Lower lobe of right lung (tissue), 2 donors: ENCODE measurements at regions of chr14 and their contacts with region 1.

Region 1: DNA sequence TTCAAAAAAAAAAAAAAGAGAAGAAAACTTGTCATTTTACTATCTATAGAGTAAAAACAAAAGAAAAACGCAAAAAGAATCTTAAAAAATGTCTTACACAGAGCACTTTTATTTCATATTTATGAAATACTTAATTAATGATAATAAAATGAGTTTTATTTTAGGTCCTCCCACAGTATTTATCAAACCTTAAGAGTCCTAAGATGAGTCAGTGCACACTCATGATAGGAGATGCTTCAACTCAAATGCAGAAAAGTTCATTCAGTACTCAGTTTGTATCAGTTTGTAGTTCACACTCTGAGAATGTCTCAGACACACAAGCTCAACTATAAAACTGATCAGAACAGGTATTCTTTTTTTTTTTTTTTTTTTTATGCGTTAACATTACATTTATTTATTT is 41.7 kb downstream of the TRIM9 start:
- DNase-seq: no peak
- ATAC-seq: no peak
- H3K4me3 ChIP-seq: no peak overlapping the region
- H3K27ac ChIP-seq: no peak overlapping the region
- H3K4me1 ChIP-seq: no peaks in the 10 kb centered on the region
- H3K27me3 ChIP-seq: no peaks in the 10 kb centered on the region
- CTCF ChIP-seq: no peak

Region 2: DNA sequence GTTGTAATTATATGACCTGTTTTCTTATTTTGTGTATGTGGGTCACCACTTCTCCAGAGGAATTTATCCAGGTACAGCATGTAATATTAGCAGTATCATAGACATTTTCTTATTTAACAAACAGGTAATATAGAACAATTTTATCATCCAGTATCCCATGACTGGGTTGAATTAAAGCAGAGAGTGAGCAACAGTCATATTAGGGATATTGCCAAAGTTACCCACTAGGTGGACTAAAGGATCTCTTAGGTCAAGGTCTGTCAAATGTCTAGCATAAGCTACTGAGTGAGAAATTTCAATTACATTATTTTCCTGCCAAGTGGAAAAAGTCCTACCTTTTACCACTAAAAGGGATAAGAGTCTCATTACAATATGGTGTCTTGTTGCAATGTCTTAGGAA is 103.9 kb after region 1 on chr14:
- intact Hi-C with region 1: no loop called
- DNase-seq: no peak
- ATAC-seq: no peak
- H3K4me3 ChIP-seq: no peak overlapping the region
- H3K27ac ChIP-seq: no peak overlapping the region
- H3K4me1 ChIP-seq: no peaks in the 10 kb centered on the region
- H3K27me3 ChIP-seq: no peaks in the 10 kb centered on the region
- CTCF ChIP-seq: peak; percentile 16

Region 3: DNA sequence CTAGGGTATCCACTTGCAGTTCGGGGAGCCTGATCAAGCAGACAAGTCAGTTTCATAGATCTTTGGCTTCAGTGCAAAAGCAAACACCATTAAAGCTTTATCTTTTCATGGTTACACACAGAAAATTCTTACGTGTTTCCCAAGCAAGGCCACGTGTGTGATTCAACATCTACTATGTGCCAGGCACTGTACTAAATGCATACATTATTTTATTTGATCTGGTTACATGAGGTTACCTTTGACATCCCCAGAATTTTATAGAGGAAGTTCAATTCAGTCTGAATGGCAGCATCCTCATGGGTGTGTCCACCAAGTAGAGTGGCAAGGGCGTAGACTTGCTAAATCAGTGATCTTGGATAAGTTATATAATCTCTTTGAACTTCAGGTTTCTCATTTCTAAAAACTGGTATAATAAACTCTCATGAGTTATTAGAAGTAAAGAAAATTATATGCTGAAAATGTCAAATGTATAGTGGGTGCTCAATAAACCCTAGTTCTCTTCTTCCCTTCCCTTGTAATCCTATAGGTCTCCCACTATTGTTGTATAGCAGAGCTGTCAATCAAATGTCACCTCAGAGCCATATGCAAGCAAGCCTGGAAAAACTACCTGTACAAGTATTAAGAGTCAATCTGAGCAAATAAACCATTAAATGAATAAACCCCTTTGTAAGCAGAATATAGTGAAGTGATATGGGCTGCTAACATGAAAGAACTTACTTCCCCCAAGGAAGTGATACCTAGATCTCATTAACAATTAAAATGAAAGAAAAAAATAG is 136.6 kb after region 1 on chr14:
- intact Hi-C with region 1: loop called (anchors 5 kb)
- DNase-seq: no peak
- ATAC-seq: no peak
- H3K4me3 ChIP-seq: no peak overlapping the region
- H3K27ac ChIP-seq: no peak overlapping the region
- H3K4me1 ChIP-seq: no peaks in the 10 kb centered on the region
- H3K27me3 ChIP-seq: no peaks in the 10 kb centered on the region
- CTCF ChIP-seq: no peak

Region 4: DNA sequence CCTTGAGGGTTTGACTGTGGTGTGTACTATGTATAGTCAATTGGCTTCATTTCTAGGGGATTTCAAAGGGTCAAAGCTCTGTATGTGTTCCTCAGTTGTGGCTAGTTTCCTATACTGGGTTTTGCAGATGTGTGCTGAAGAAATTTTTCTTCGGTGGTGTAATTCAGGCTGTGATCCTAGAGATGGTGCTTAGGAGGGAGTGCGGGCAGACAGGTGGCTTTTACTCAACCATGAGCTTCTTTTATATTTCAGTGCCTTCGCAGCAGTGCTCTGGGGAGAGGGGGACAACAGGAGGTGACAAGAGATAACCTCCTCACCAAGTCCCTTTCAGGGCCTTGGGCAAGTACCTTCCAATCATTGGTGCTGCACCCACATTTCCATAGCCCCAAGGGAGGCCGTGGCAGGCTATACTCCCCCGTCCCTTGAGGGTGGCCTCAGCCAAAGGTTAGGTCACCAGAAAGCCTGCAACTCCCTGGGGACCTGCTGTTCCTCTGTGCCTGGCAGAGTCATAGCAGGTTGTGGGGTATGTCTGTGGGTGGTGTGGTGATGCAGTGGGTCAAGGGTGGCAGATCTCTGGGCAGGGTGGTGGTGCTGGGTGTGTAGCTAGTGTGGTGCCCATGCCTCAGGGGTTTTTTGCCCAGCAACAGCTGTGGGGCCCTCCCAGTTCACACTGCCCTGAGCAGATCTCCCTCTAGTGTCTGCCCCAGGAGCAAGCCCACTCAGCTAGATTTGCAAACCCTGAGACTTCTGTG is 149.9 kb after region 1 on chr14:
- intact Hi-C with region 1: no loop called
- DNase-seq: no peak
- ATAC-seq: no peak
- H3K4me3 ChIP-seq: no peak overlapping the region
- H3K27ac ChIP-seq: no peak overlapping the region
- H3K4me1 ChIP-seq: no peaks in the 10 kb centered on the region
- H3K27me3 ChIP-seq: no peaks in the 10 kb centered on the region
- CTCF ChIP-seq: no peak